ENCODE measurements at regions of chr12 and their contacts with region 1.

Region 1: GRCh38 chr12:127108360-127109215 is 1158.4 kb upstream of the TMEM132C start:
- DNase-seq: peak; percentile 64
- H3K4me3 Mint-ChIP-seq: no peak overlapping the region
- H3K27ac Mint-ChIP-seq: no peak overlapping the region
- H3K4me1 Mint-ChIP-seq: no peaks in the 10 kb centered on the region
- H3K27me3 Mint-ChIP-seq: no peaks in the 10 kb centered on the region
- CTCF ChIP-seq: peak; percentile 53

Region 2: DNA sequence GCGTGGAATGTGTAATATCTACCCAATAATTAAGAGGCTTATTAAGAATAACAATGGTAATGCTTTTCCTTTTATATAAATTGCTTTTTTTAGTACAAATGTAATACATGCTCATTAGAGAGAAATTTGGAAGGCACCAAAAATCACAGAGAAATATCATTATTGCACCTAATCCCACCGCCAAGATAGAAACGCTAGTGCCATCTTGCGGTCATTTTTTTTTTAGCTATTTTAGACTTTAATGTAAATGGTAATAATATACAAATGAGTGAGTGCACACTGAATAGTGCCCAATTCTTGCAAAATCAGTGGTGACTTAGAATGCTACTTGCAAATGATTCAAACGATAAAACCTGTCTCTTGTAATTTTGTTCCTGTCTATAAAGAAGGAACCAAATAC is 581.6 kb after region 1 on chr12:
- CTCF ChIA-PET with region 1: no interaction called
- intact Hi-C with region 1: loop called (anchors 5 kb)
- DNase-seq: no peak
- H3K4me3 Mint-ChIP-seq: no peak overlapping the region
- H3K27ac Mint-ChIP-seq: no peak overlapping the region
- H3K4me1 Mint-ChIP-seq: no peaks in the 10 kb centered on the region
- H3K27me3 Mint-ChIP-seq: no peaks in the 10 kb centered on the region
- CTCF ChIP-seq: no peak